Activated T-helper 1 cell treated with anti-CD3 and anti-CD28 coated beads, Interleukin-12 subunit alpha, Interleukin-12 subunit beta, Interleukin-2, Interleukin-4 antibody, amounts not matched to agents 30 ng/mL and 10 ng/mL and 1 ng/mL, durations not matched to agents 14 hours and 24 hours and 36 hours (primary cell): ENCODE measurements at regions of chr1 and their contacts with region 1.

Region 1: GRCh38 chr1:161382214-161383019 is 14.7 kb upstream of the CFAP126 start:
- DNase-seq: no peak
- H3K4me3 Mint-ChIP-seq: no peak overlapping the region
- H3K27ac Mint-ChIP-seq: no peak overlapping the region
- H3K4me1 Mint-ChIP-seq: peaks cover 18% of the 10 kb centered on the region
- H3K27me3 Mint-ChIP-seq: peaks cover 2% of the 10 kb centered on the region

Region 2: DNA sequence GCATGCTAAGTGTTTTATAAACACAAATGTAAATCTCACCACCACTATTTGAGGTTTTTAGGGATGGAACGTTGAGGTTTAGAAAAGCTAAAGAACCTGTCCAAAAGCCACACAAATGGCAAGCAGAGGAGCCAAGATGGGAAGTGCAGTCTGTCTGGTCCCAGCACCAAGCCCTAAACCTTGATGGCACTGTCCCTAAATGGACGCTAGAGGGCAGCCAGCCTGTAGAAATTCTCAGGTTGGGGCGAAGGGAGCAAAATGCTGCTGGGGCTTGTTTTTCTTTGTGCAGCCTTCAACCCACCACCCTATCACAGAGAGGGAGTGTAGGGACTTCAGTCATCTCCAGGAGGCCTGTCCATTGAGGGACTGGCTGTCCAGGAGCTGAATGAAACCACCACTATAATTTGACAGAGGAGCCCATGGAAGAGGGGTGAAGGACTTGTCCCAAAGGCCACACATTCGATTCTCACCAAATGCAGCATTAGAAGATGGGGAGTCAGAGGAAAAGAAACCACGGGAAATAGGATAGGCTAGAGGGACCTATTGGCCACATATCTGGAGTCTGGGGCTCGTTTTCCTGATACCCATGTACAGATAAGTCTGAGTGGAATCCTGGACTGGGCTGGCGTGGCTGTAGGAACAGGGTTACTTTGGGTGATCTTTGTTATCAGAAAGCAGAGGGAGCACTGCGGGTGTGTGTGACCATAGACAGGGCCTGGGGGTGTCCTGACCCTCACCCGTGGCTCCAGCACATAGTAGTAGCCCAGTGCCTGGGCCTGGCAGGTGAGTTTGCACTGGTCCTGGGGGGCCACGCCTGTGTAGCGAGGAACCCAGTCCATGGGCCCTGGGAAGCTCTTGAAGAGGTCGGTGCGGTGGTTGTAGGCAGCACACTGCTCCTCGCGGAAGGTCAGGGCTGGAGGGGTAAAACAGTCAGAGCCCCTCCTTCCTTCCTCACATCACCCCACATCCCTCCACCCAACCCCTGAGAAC is 189.6 kb before region 1 on chr1:
- intact Hi-C with region 1: loop called (anchors 1 kb)
- DNase-seq: peak; percentile 63
- H3K4me3 Mint-ChIP-seq: no peak overlapping the region
- H3K27ac Mint-ChIP-seq: peak overlapping the region; percentile 67
- H3K4me1 Mint-ChIP-seq: peaks cover 53% of the 10 kb centered on the region
- H3K27me3 Mint-ChIP-seq: no peaks in the 10 kb centered on the region

Region 3: GRCh38 chr1:161305867-161306519 is 76.4 kb before region 1 on chr1:
- intact Hi-C with region 1: loop called (anchors 1 kb)
- DNase-seq: peak; percentile 82
- H3K4me3 Mint-ChIP-seq: peak overlapping the region; percentile 99
- H3K27ac Mint-ChIP-seq: peak overlapping the region; percentile 94
- H3K4me1 Mint-ChIP-seq: peaks cover 52% of the 10 kb centered on the region
- H3K27me3 Mint-ChIP-seq: no peaks in the 10 kb centered on the region